Spleen (tissue), 13 donors: ENCODE measurements at regions of chr2 and their contacts with region 1.

Region 1: GRCh38 chr2:172102391-172103278 is at the start of gene DLX2:
- DNase-seq: peak; percentile 91
- H3K4me3 ChIP-seq: peak within 1 kb of the TSS; percentile 44 to 80 (median 65)
- H3K27ac ChIP-seq: no peak within 1 kb of the TSS
- H3K4me1 ChIP-seq: peaks cover 49 to 89% (median 70%) of the 10 kb centered on the region in 6 donors
- H3K27me3 ChIP-seq: peaks cover 35 to 100% (median 100%) of the 10 kb centered on the region in 7 donors
- CTCF ChIP-seq: no peak
- POLR2A ChIP-seq: no peak
- total RNA-seq, gene DLX2: not detected

Region 2: GRCh38 chr2:171703574-171704347 is 398.9 kb before region 1 on chr2:
- intact Hi-C with region 1: loop called (anchors 10 kb)
- DNase-seq: no peak
- H3K4me3 ChIP-seq: no peak overlapping the region
- H3K27ac ChIP-seq: no peak overlapping the region
- H3K4me1 ChIP-seq: peaks cover 0 to 52% (median 13%) of the 10 kb centered on the region in 6 donors
- H3K27me3 ChIP-seq: no peaks in the 10 kb centered on the region
- CTCF ChIP-seq: peak in 7 of 11 experiments; percentile 10 to 51 (median 31)
- POLR2A ChIP-seq: no peak

Region 3: GRCh38 chr2:171811245-171811628 is 291.4 kb before region 1 on chr2:
- intact Hi-C with region 1: loop called (anchors 10 kb)
- DNase-seq: no peak
- H3K4me3 ChIP-seq: no peak overlapping the region
- H3K27ac ChIP-seq: no peak overlapping the region
- H3K4me1 ChIP-seq: no peaks in the 10 kb centered on the region
- H3K27me3 ChIP-seq: no peaks in the 10 kb centered on the region
- CTCF ChIP-seq: peak in 3 of 11 experiments; percentile 12 to 23 (median 19)
- POLR2A ChIP-seq: no peak

Region 4: DNA sequence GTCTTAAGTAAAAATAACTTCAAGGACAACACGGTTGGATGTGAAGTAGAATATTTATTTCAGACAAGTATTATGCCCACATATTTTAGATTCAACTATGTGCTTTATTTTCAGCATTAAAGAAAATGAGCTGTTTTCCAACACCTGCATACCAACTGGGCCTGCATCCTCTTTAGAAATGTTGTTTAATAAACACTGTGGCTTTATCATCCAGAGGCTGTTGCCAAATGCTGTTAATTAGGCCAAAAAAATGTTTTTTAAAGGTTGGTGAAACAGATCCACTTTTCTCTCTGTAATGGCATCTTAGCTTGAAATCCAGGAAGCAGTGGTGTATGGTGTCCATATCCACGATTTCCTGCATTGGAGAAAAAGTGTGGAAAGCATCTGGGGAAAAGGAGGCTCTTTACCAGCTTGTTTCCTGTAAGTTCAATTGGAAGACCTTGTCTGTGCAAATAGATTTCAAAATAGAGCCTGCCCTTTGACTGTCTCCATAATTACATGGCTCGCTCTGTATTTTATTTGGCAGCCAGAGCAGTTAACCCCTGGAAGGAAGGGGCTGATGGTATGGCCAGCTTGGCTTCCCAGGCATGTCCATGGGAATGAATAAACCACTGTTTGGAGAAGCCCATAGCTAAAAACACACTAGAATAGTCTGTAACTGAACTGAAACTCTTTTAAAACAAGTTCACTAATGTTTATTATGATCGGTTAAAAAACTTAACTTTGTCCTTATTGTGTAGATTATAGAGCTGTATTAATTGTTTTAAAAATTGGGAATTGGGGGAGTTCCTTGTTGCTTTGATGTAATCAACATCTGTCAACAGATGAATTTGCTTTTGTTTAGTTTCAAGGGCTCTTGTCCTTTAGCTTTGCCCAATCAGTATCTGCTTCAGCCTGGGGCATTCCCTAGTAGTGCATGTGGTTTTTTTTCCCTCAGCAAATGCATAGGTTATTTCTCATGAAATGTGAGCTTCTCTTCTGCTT is 50.3 kb before region 1 on chr2:
- intact Hi-C with region 1: no loop called
- DNase-seq: no peak
- H3K4me3 ChIP-seq: no peak overlapping the region
- H3K27ac ChIP-seq: no peak overlapping the region
- H3K4me1 ChIP-seq: peaks cover 0 to 5% (median 0%) of the 10 kb centered on the region in 6 donors
- H3K27me3 ChIP-seq: no peaks in the 10 kb centered on the region
- CTCF ChIP-seq: no peak
- POLR2A ChIP-seq: no peak

Region 5: GRCh38 chr2:172710584-172711024 is 608.0 kb after region 1 on chr2:
- intact Hi-C with region 1: no loop called
- DNase-seq: no peak
- H3K4me3 ChIP-seq: no peak overlapping the region
- H3K27ac ChIP-seq: no peak overlapping the region
- H3K4me1 ChIP-seq: no peaks in the 10 kb centered on the region
- H3K27me3 ChIP-seq: peaks cover 0 to 18% (median 0%) of the 10 kb centered on the region in 7 donors
- CTCF ChIP-seq: peak in 9 of 11 experiments; percentile 13 to 53 (median 36)
- POLR2A ChIP-seq: no peak